ENCODE measurements at regions of chr3 and their contacts with region 1.

Region 1: DNA sequence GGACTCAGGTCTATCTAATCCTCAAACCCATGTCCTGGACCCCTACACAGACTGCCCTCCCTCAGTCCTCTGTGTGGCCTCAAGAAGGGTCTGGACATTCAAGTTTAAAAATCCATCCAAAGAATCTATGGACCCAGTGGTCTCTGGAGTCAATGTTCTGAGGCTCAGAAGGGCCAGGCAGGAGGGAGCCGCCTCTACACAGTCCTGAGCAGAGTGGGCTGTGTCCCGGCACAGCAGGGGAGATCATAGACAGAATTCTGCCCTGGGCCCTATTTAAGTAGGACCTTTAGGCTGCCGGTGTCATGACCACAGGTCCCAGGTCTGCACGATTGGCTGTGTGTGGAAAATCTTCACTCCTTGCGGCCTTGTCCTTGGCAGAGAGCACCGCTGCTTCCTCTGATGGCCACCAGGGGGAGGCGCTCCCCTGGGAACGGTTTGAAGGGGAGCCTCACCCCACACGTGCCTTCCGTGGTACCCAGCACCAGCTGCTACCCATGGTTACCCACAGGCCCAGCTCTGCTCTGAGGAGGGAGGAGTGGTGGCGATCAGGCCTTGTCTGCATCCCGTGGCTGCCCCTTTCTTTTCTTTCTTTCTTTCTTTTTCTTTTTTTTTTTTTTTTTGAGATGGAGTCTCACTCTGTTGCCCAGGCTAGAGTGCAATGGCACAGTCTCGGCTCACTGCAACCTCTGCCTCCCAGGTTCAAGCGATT is 37.9 kb downstream of the CHRD start:
- DNase-seq: peak; percentile 60 to 67 (median 61)
- H3K4me3 ChIP-seq: no peak overlapping the region
- H3K4me3 Mint-ChIP-seq: peak overlapping the region in 1 of 8 donors; percentile 20
- H3K27ac ChIP-seq: no peak overlapping the region
- H3K27ac Mint-ChIP-seq: no peak overlapping the region
- H3K4me1 ChIP-seq: no peaks in the 10 kb centered on the region
- H3K4me1 Mint-ChIP-seq: peaks cover 0 to 2% (median 0%) of the 10 kb centered on the region in 4 donors
- H3K27me3 ChIP-seq: no peaks in the 10 kb centered on the region
- H3K27me3 Mint-ChIP-seq: peaks cover 0 to under 1% of the 10 kb centered on the region in 2 donors

Region 2: GRCh38 chr3:184371570-184372018 is 46.2 kb before region 1 on chr3:
- CTCF ChIA-PET with region 1: interaction called, 5 read pairs
- POLR2A ChIA-PET with region 1: no interaction called
- intact Hi-C with region 1: loop called (anchors 2 kb)
- DNase-seq: peak; percentile 47 to 62 (median 58)
- H3K4me3 ChIP-seq: no peak overlapping the region
- H3K4me3 Mint-ChIP-seq: no peak overlapping the region
- H3K27ac ChIP-seq: no peak overlapping the region
- H3K27ac Mint-ChIP-seq: no peak overlapping the region
- H3K4me1 ChIP-seq: no peaks in the 10 kb centered on the region
- H3K4me1 Mint-ChIP-seq: peaks cover 6 to 18% (median 10%) of the 10 kb centered on the region in 4 donors
- H3K27me3 ChIP-seq: no peaks in the 10 kb centered on the region
- H3K27me3 Mint-ChIP-seq: peaks cover 9 to 11% of the 10 kb centered on the region in 2 donors

Region 3: GRCh38 chr3:184443380-184443779 is 25.6 kb after region 1 on chr3:
- CTCF ChIA-PET with region 1: no interaction called
- POLR2A ChIA-PET with region 1: no interaction called
- intact Hi-C with region 1: no loop called
- DNase-seq: no peak
- H3K4me3 ChIP-seq: no peak overlapping the region
- H3K4me3 Mint-ChIP-seq: no peak overlapping the region
- H3K27ac ChIP-seq: no peak overlapping the region
- H3K27ac Mint-ChIP-seq: no peak overlapping the region
- H3K4me1 ChIP-seq: no peaks in the 10 kb centered on the region
- H3K4me1 Mint-ChIP-seq: peaks cover 0 to 7% (median 2%) of the 10 kb centered on the region in 4 donors
- H3K27me3 ChIP-seq: no peaks in the 10 kb centered on the region
- H3K27me3 Mint-ChIP-seq: peaks cover 5 to 10% of the 10 kb centered on the region in 2 donors

Measured in CD4-positive, alpha-beta memory T cell (primary cell).